Breast epithelium (tissue), 4 donors: ENCODE measurements at regions of chr20 and their contacts with region 1.

Region 1: DNA sequence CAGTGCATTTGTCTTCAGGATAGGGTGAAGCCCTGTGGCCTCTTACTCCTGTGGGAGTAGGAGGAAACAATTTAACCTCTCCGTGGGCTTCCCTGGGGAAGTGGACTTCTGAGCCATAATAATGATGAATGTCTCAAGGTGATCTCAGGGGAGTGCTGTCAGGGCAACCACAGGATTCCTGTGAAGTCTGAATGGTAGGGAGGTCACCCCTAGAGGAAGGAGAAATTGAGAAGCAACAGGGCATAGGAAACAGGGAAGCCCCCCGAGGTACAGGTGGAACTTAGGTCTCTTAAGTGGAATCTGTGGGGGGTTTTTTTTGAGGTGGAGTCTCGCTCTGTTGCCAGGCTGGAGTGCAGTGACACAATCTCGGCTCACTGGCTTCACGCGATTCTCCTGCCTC is 26.9 kb downstream of the STK35 start:
- DNase-seq: no peak
- H3K4me3 ChIP-seq: no peak overlapping the region
- H3K27ac ChIP-seq: no peak overlapping the region
- H3K4me1 ChIP-seq: peaks cover 10 to 28% of the 10 kb centered on the region in 2 donors
- H3K27me3 ChIP-seq: no peaks in the 10 kb centered on the region
- CTCF ChIP-seq: no peak
- POLR2A ChIP-seq: no peak

Region 2: GRCh38 chr20:2178318-2179232 is 50.0 kb after region 1 on chr20:
- intact Hi-C with region 1: loop called (anchors 2 kb)
- DNase-seq: no peak
- H3K4me3 ChIP-seq: no peak overlapping the region
- H3K27ac ChIP-seq: no peak overlapping the region
- H3K4me1 ChIP-seq: no peaks in the 10 kb centered on the region
- H3K27me3 ChIP-seq: no peaks in the 10 kb centered on the region
- CTCF ChIP-seq: no peak
- POLR2A ChIP-seq: no peak